Naive thymus-derived CD4-positive, alpha-beta T cell (primary cell): ENCODE measurements at regions of chr1 and their contacts with region 1.

Region 1: GRCh38 chr1:107782217-107782845 is 182.6 kb downstream of the VAV3 start:
- DNase-seq: peak in 7 of 9 donors; percentile 41 to 76 (median 66)
- ATAC-seq: no peak
- H3K4me3 ChIP-seq: no peak overlapping the region
- H3K4me3 Mint-ChIP-seq: no peak overlapping the region
- H3K27ac ChIP-seq: no peak overlapping the region
- H3K27ac Mint-ChIP-seq: peak overlapping the region in 1 of 9 donors; percentile 1
- H3K4me1 ChIP-seq: peaks cover 18 to 24% of the 10 kb centered on the region in 2 donors
- H3K4me1 Mint-ChIP-seq: peaks cover 23 to 39% (median 25%) of the 10 kb centered on the region in 7 donors
- H3K27me3 ChIP-seq: no peaks in the 10 kb centered on the region
- H3K27me3 Mint-ChIP-seq: peaks cover 0 to 2% (median 0%) of the 10 kb centered on the region in 5 donors

Region 2: GRCh38 chr1:107626073-107626833 is 156.1 kb before region 1 on chr1:
- CTCF ChIA-PET with region 1: no interaction called
- POLR2A ChIA-PET with region 1: no interaction called
- intact Hi-C with region 1: no loop called
- DNase-seq: no peak
- ATAC-seq: no peak
- H3K4me3 ChIP-seq: no peak overlapping the region
- H3K4me3 Mint-ChIP-seq: no peak overlapping the region
- H3K27ac ChIP-seq: no peak overlapping the region
- H3K27ac Mint-ChIP-seq: no peak overlapping the region
- H3K4me1 ChIP-seq: no peaks in the 10 kb centered on the region
- H3K4me1 Mint-ChIP-seq: peaks cover 0 to 4% (median 0%) of the 10 kb centered on the region in 7 donors
- H3K27me3 ChIP-seq: no peaks in the 10 kb centered on the region
- H3K27me3 Mint-ChIP-seq: no peaks in the 10 kb centered on the region

Region 3: GRCh38 chr1:107804134-107804533 is 21.8 kb after region 1 on chr1:
- CTCF ChIA-PET with region 1: no interaction called
- POLR2A ChIA-PET with region 1: no interaction called
- intact Hi-C with region 1: loop called in 1 of 2 experiments (anchors 1 kb)
- DNase-seq: peak in 6 of 9 donors; percentile 22 to 65 (median 56)
- ATAC-seq: peak; percentile 76
- H3K4me3 ChIP-seq: no peak overlapping the region
- H3K4me3 Mint-ChIP-seq: peak overlapping the region in 9 of 10 donors; percentile 46 to 81 (median 60)
- H3K27ac ChIP-seq: no peak overlapping the region
- H3K27ac Mint-ChIP-seq: peak overlapping the region in 8 of 9 donors; percentile 5 to 79 (median 49)
- H3K4me1 ChIP-seq: peaks cover 22 to 23% of the 10 kb centered on the region in 2 donors
- H3K4me1 Mint-ChIP-seq: peaks cover 27 to 55% (median 36%) of the 10 kb centered on the region in 7 donors
- H3K27me3 ChIP-seq: no peaks in the 10 kb centered on the region
- H3K27me3 Mint-ChIP-seq: peaks cover 0 to 4% (median 0%) of the 10 kb centered on the region in 5 donors

Region 4: DNA sequence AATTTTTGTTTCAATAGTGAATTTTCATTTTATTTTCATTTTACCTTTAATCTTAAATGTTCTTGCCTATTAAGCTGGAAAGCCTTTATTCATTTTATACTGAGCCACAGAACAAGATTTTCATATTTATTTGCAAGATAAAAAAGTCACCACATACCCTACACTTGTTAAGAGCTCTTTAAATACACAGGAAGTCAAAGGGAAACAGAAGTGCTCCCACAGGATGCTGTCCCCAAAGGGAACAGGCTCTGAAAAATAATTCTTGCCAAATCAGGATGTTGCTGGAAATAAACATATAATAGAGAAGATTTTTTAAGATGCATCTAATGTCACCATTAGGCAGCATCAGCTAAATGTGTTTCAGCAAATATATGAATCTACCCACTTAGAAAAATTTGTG is 69.1 kb after region 1 on chr1:
- CTCF ChIA-PET with region 1: no interaction called
- POLR2A ChIA-PET with region 1: no interaction called
- intact Hi-C with region 1: no loop called
- DNase-seq: no peak
- ATAC-seq: no peak
- H3K4me3 ChIP-seq: no peak overlapping the region
- H3K4me3 Mint-ChIP-seq: no peak overlapping the region
- H3K27ac ChIP-seq: no peak overlapping the region
- H3K27ac Mint-ChIP-seq: no peak overlapping the region
- H3K4me1 ChIP-seq: no peaks in the 10 kb centered on the region
- H3K4me1 Mint-ChIP-seq: peaks cover 0 to 21% (median 10%) of the 10 kb centered on the region in 7 donors
- H3K27me3 ChIP-seq: no peaks in the 10 kb centered on the region
- H3K27me3 Mint-ChIP-seq: peaks cover 0 to 2% (median 0%) of the 10 kb centered on the region in 5 donors

Region 5: DNA sequence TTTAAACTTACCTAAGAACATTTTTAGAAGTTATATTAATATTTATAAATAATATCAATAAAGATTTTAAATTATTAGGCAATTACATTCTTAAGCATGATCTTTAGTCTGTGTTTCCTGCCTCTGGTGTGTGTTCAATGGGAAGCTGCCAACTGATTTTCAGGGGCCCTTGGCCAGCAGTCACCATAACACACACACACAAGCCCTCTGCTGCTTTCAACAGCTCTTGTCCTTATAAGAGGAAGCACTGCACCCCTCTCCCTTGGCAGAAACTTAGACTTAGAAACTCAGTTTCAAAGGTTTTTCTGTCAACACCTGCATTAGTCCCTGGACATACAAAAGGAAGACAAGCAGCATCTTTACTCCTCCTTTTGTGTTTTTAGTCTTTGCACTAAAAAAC is 101.2 kb after region 1 on chr1:
- CTCF ChIA-PET with region 1: no interaction called
- POLR2A ChIA-PET with region 1: no interaction called
- intact Hi-C with region 1: no loop called
- DNase-seq: no peak
- ATAC-seq: no peak
- H3K4me3 ChIP-seq: no peak overlapping the region
- H3K4me3 Mint-ChIP-seq: no peak overlapping the region
- H3K27ac ChIP-seq: no peak overlapping the region
- H3K27ac Mint-ChIP-seq: no peak overlapping the region
- H3K4me1 ChIP-seq: peaks cover 0 to 5% of the 10 kb centered on the region in 2 donors
- H3K4me1 Mint-ChIP-seq: peaks cover 0 to 23% (median 6%) of the 10 kb centered on the region in 7 donors
- H3K27me3 ChIP-seq: no peaks in the 10 kb centered on the region
- H3K27me3 Mint-ChIP-seq: no peaks in the 10 kb centered on the region

Region 6: GRCh38 chr1:107897438-107898345 is 115.4 kb after region 1 on chr1:
- CTCF ChIA-PET with region 1: no interaction called
- POLR2A ChIA-PET with region 1: interaction called, 3 read pairs
- intact Hi-C with region 1: loop called in 1 of 2 experiments (anchors 2 kb)
- DNase-seq: peak in 5 of 9 donors; percentile 4 to 15 (median 10)
- ATAC-seq: peak; percentile 84
- H3K4me3 ChIP-seq: no peak overlapping the region
- H3K4me3 Mint-ChIP-seq: peak overlapping the region in 9 of 10 donors; percentile 22 to 81 (median 60)
- H3K27ac ChIP-seq: no peak overlapping the region
- H3K27ac Mint-ChIP-seq: peak overlapping the region in 8 of 9 donors; percentile 2 to 87 (median 54)
- H3K4me1 ChIP-seq: peaks cover 8 to 14% of the 10 kb centered on the region in 2 donors
- H3K4me1 Mint-ChIP-seq: peaks cover 21 to 59% (median 45%) of the 10 kb centered on the region in 7 donors
- H3K27me3 ChIP-seq: no peaks in the 10 kb centered on the region
- H3K27me3 Mint-ChIP-seq: no peaks in the 10 kb centered on the region

Region 7: DNA sequence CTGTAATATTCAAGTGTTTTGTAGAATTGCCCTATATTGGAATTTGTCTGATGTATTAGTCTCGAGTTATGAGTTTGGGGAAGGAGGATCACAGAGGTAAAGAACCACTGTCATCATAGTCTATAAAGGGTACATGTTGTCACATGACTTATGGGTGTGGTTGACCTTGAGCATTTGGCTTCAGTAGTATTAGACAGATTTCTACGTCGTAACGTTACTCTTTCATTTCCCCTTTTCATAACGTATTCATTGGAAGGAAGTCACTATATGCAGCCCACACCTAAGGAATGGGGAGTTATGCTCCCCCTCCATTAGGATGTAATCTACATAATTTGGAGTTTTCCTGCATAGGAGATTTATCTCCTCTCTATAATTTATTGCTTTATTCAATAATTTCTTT is 292.7 kb after region 1 on chr1:
- CTCF ChIA-PET with region 1: no interaction called
- POLR2A ChIA-PET with region 1: no interaction called
- intact Hi-C with region 1: loop called in 1 of 2 experiments (anchors 1 kb)
- DNase-seq: no peak
- ATAC-seq: peak; percentile 58
- H3K4me3 ChIP-seq: no peak overlapping the region
- H3K4me3 Mint-ChIP-seq: no peak overlapping the region
- H3K27ac ChIP-seq: no peak overlapping the region
- H3K27ac Mint-ChIP-seq: peak overlapping the region in 2 of 9 donors; percentile 21 to 78
- H3K4me1 ChIP-seq: peaks cover 28 to 37% of the 10 kb centered on the region in 2 donors
- H3K4me1 Mint-ChIP-seq: peaks cover 24 to 60% (median 47%) of the 10 kb centered on the region in 7 donors
- H3K27me3 ChIP-seq: no peaks in the 10 kb centered on the region
- H3K27me3 Mint-ChIP-seq: no peaks in the 10 kb centered on the region

Region 8: GRCh38 chr1:108199781-108200570 is 417.6 kb after region 1 on chr1 and contains the start of gene SLC25A24:
- CTCF ChIA-PET with region 1: no interaction called
- POLR2A ChIA-PET with region 1: no interaction called
- intact Hi-C with region 1: loop called (anchors 1 to 5 kb)
- DNase-seq: peak; percentile 58 to 83 (median 71)
- ATAC-seq: peak; percentile 96
- H3K4me3 ChIP-seq: peak within 1 kb of the TSS; percentile 75
- H3K4me3 Mint-ChIP-seq: peak within 1 kb of the TSS; percentile 69 to 93 (median 88)
- H3K27ac ChIP-seq: peak within 1 kb of the TSS; percentile 65
- H3K27ac Mint-ChIP-seq: peak within 1 kb of the TSS; percentile 52 to 87 (median 82)
- H3K4me1 ChIP-seq: peaks cover 3 to 16% of the 10 kb centered on the region in 2 donors
- H3K4me1 Mint-ChIP-seq: peaks cover 18 to 42% (median 30%) of the 10 kb centered on the region in 7 donors
- H3K27me3 ChIP-seq: no peaks in the 10 kb centered on the region
- H3K27me3 Mint-ChIP-seq: peaks cover 0 to 18% (median 0%) of the 10 kb centered on the region in 5 donors
- total RNA-seq, gene SLC25A24: 7.1 to 27.2 (median 10.2) TPM